ENCODE measurements at regions of chr13 and their contacts with region 1.

Region 1: GRCh38 chr13:27533155-27533643 is 82.8 kb upstream of the MTIF3 start:
- DNase-seq: peak; percentile 52 to 78
- H3K4me3 ChIP-seq: peak overlapping the region in 1 of 3 donors; percentile 41
- H3K27ac ChIP-seq: no peak overlapping the region
- H3K4me1 ChIP-seq: no peaks in the 10 kb centered on the region
- H3K27me3 ChIP-seq: no peaks in the 10 kb centered on the region
- CTCF ChIP-seq: peak; percentile 21 to 84 (median 81)
- POLR2A ChIP-seq: no peak

Region 2: DNA sequence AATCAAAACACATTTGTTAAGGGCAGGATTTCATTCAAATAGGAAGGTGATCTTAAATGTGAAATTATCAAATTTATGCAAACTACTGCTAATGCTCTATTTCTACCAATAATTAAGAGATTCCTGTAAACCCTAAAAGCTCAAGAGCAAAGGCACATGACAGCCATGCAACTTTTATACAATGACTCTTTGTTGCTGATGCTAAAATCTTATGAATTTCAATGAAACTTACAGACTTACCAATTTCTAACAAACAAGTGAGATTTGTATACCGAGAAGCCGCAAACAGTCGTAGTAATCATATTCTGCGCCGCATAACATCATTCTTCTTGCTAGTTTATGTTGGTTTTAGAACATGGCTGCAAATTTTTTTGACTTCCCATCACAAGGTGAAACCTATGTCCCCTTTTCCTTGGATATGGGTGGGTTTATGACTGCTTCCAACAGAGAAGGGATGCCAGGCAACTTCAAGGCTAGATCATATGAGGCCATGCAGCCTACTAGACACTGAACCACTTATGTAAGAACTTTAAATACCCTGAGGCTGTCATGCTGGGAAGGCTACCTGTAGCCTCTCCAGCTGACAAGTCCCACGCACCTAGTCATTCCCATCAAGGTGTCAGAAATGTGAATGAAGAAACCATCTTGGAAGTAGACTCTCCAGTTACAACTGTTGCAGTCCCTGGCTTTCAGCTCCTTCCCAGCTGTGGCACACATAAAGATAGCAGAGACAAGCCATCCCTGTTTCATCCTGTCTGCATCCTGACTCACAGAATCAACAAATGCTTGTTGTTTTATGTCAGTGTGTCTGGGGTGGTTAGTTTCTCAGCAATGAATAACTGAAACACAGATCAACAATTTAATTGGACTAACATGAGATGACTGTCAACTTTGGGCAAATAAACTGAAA is 45.2 kb after region 1 on chr13:
- intact Hi-C with region 1: no loop called
- DNase-seq: no peak
- H3K4me3 ChIP-seq: no peak overlapping the region
- H3K27ac ChIP-seq: no peak overlapping the region
- H3K4me1 ChIP-seq: no peaks in the 10 kb centered on the region
- H3K27me3 ChIP-seq: no peaks in the 10 kb centered on the region
- CTCF ChIP-seq: no peak
- POLR2A ChIP-seq: no peak

Region 3: GRCh38 chr13:27826379-27827353 is 293.5 kb after region 1 on chr13:
- intact Hi-C with region 1: loop called (anchors 5 kb)
- DNase-seq: peak; percentile 64 to 80
- H3K4me3 ChIP-seq: peak overlapping the region in 2 of 3 donors; percentile 20 to 44
- H3K27ac ChIP-seq: no peak overlapping the region
- H3K4me1 ChIP-seq: no peaks in the 10 kb centered on the region
- H3K27me3 ChIP-seq: peaks cover 0 to 72% of the 10 kb centered on the region in 2 donors
- CTCF ChIP-seq: peak; percentile 82 to 94 (median 87)
- POLR2A ChIP-seq: no peak

Measured in breast epithelium (tissue), 4 donors.